ENCODE measurements at regions of chr10 and their contacts with region 1.

Region 1: GRCh38 chr10:22825853-22826346 is 102.0 kb upstream of the ARMC3 start:
- DNase-seq: no peak
- ATAC-seq: no peak
- H3K4me3 ChIP-seq: no peak overlapping the region
- H3K4me3 Mint-ChIP-seq: no peak overlapping the region
- H3K27ac ChIP-seq: no peak overlapping the region
- H3K27ac Mint-ChIP-seq: no peak overlapping the region
- H3K4me1 ChIP-seq: no peaks in the 10 kb centered on the region
- H3K4me1 Mint-ChIP-seq: no peaks in the 10 kb centered on the region
- H3K27me3 ChIP-seq: no peaks in the 10 kb centered on the region
- H3K27me3 Mint-ChIP-seq: no peaks in the 10 kb centered on the region
- CTCF ChIP-seq: no peak

Region 2: GRCh38 chr10:22704471-22704911 is 121.4 kb before region 1 on chr10:
- CTCF ChIA-PET with region 1: no interaction called
- POLR2A ChIA-PET with region 1: interaction called, 13 read pairs
- intact Hi-C with region 1: no loop called
- DNase-seq: peak; percentile 61
- ATAC-seq: peak; percentile 70
- H3K4me3 ChIP-seq: peak overlapping the region in 2 of 5 experiments; percentile 12 to 16
- H3K4me3 Mint-ChIP-seq: peak overlapping the region; percentile 79
- H3K27ac ChIP-seq: peak overlapping the region; percentile 25 to 57
- H3K27ac Mint-ChIP-seq: peak overlapping the region; percentile 91
- H3K4me1 ChIP-seq: peaks cover 79 to 80% of the 10 kb centered on the region in 2 donors
- H3K4me1 Mint-ChIP-seq: peaks cover 90% of the 10 kb centered on the region
- H3K27me3 ChIP-seq: no peaks in the 10 kb centered on the region
- H3K27me3 Mint-ChIP-seq: no peaks in the 10 kb centered on the region
- CTCF ChIP-seq: no peak

Measured in B cell (primary cell).